ENCODE measurements at regions of chr6 and their contacts with region 1.

Region 1: GRCh38 chr6:156686995-156687788 is 90.0 kb upstream of the ARID1B start:
- DNase-seq: peak in 8 of 9 donors; percentile 77 to 91 (median 87)
- ATAC-seq: peak; percentile 93
- H3K4me3 ChIP-seq: peak overlapping the region; percentile 89
- H3K4me3 Mint-ChIP-seq: peak overlapping the region; percentile 81 to 96 (median 90)
- H3K27ac ChIP-seq: peak overlapping the region; percentile 100
- H3K27ac Mint-ChIP-seq: peak overlapping the region; percentile 87 to 99 (median 95)
- H3K4me1 ChIP-seq: peaks cover 4 to 17% of the 10 kb centered on the region in 2 donors
- H3K4me1 Mint-ChIP-seq: peaks cover 10 to 28% (median 20%) of the 10 kb centered on the region in 7 donors
- H3K27me3 ChIP-seq: no peaks in the 10 kb centered on the region
- H3K27me3 Mint-ChIP-seq: peaks cover 0 to 27% (median 0%) of the 10 kb centered on the region in 5 donors

Region 2: GRCh38 chr6:155327326-155328073 is 1359.7 kb before region 1 on chr6:
- CTCF ChIA-PET with region 1: no interaction called
- POLR2A ChIA-PET with region 1: no interaction called
- intact Hi-C with region 1: loop called (anchors 2 to 5 kb)
- DNase-seq: peak; percentile 34 to 76 (median 66)
- ATAC-seq: peak; percentile 80
- H3K4me3 ChIP-seq: no peak overlapping the region
- H3K4me3 Mint-ChIP-seq: peak overlapping the region in 6 of 10 donors; percentile 0 to 40 (median 16)
- H3K27ac ChIP-seq: no peak overlapping the region
- H3K27ac Mint-ChIP-seq: peak overlapping the region; percentile 1 to 68 (median 15)
- H3K4me1 ChIP-seq: peaks cover 0 to 16% of the 10 kb centered on the region in 2 donors
- H3K4me1 Mint-ChIP-seq: peaks cover 3 to 21% (median 19%) of the 10 kb centered on the region in 7 donors
- H3K27me3 ChIP-seq: no peaks in the 10 kb centered on the region
- H3K27me3 Mint-ChIP-seq: no peaks in the 10 kb centered on the region

Region 3: DNA sequence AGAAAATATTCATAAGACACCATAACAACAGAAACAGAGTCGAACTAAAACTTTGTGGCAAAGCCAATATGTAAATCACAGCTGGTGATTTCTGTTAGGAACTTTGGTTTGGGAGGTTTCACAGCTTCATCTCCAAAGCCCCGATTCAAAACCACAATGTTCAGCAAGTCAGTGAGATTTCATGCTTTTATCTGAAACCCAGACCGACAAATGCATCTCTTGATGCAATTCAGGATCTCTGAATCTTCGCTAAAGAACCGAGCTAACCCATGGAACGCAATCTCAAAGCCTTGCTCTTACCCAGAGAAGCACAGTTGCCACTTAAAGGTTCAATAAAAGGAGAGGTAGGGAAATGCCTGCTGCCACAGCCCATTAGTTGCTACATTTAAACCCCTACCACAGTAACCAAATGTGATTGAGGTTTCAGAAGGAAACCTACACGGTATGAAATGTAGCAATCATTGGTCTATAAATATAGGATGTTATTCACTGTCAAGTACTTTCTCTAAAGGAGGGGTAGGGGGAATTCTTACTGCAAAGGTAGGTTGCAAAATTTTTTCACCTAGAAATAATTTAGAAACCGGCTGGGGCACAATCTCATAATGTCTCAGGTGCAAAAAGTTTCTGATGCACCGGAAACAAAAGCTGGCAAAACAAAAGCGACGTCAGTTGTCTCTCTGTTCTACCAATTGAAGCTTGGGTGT is 291.0 kb before region 1 on chr6:
- CTCF ChIA-PET with region 1: no interaction called
- POLR2A ChIA-PET with region 1: interaction called, 15 read pairs
- intact Hi-C with region 1: loop called in 1 of 2 experiments (anchors 1 kb)
- DNase-seq: peak in 7 of 9 donors; percentile 67 to 85 (median 77)
- ATAC-seq: peak; percentile 85
- H3K4me3 ChIP-seq: peak overlapping the region; percentile 14
- H3K4me3 Mint-ChIP-seq: peak overlapping the region; percentile 49 to 95 (median 84)
- H3K27ac ChIP-seq: peak overlapping the region; percentile 85
- H3K27ac Mint-ChIP-seq: peak overlapping the region; percentile 60 to 100 (median 99)
- H3K4me1 ChIP-seq: peaks cover 16 to 67% of the 10 kb centered on the region in 2 donors
- H3K4me1 Mint-ChIP-seq: peaks cover 17 to 99% (median 89%) of the 10 kb centered on the region in 7 donors
- H3K27me3 ChIP-seq: no peaks in the 10 kb centered on the region
- H3K27me3 Mint-ChIP-seq: peaks cover 0 to 40% (median 0%) of the 10 kb centered on the region in 5 donors

Region 4: GRCh38 chr6:156719720-156720563 is 32.8 kb after region 1 on chr6:
- CTCF ChIA-PET with region 1: no interaction called
- POLR2A ChIA-PET with region 1: interaction called, 21 read pairs
- intact Hi-C with region 1: loop called (anchors 1 to 2 kb)
- DNase-seq: peak; percentile 56 to 83 (median 76)
- ATAC-seq: peak; percentile 95
- H3K4me3 ChIP-seq: peak overlapping the region; percentile 76
- H3K4me3 Mint-ChIP-seq: peak overlapping the region; percentile 83 to 93 (median 90)
- H3K27ac ChIP-seq: peak overlapping the region; percentile 70
- H3K27ac Mint-ChIP-seq: peak overlapping the region; percentile 38 to 98 (median 93)
- H3K4me1 ChIP-seq: peaks cover 6 to 15% of the 10 kb centered on the region in 2 donors
- H3K4me1 Mint-ChIP-seq: peaks cover 7 to 22% (median 16%) of the 10 kb centered on the region in 7 donors
- H3K27me3 ChIP-seq: no peaks in the 10 kb centered on the region
- H3K27me3 Mint-ChIP-seq: peaks cover 0 to 7% (median 0%) of the 10 kb centered on the region in 5 donors

Region 5: GRCh38 chr6:157021344-157021992 is 334.3 kb after region 1 on chr6:
- CTCF ChIA-PET with region 1: interaction called, 3 read pairs
- POLR2A ChIA-PET with region 1: interaction called, 4 read pairs
- intact Hi-C with region 1: loop called (anchors 1 kb)
- DNase-seq: peak; percentile 85 to 93 (median 91)
- ATAC-seq: peak; percentile 90
- H3K4me3 ChIP-seq: peak overlapping the region; percentile 79
- H3K4me3 Mint-ChIP-seq: peak overlapping the region; percentile 76 to 98 (median 95)
- H3K27ac ChIP-seq: peak overlapping the region; percentile 100
- H3K27ac Mint-ChIP-seq: peak overlapping the region; percentile 86 to 100 (median 99)
- H3K4me1 ChIP-seq: peaks cover 5 to 21% of the 10 kb centered on the region in 2 donors
- H3K4me1 Mint-ChIP-seq: peaks cover 32 to 82% (median 64%) of the 10 kb centered on the region in 7 donors
- H3K27me3 ChIP-seq: no peaks in the 10 kb centered on the region
- H3K27me3 Mint-ChIP-seq: no peaks in the 10 kb centered on the region

Measured in naive thymus-derived CD4-positive, alpha-beta T cell (primary cell).